Caco-2 (cell line): ENCODE measurements at regions of chr3 and their contacts with region 1.

Region 1: GRCh38 chr3:42190701-42191462 is 75.1 kb downstream of the CCK start:
- DNase-seq: peak; percentile 77 to 83
- H3K4me3 ChIP-seq: no peak overlapping the region
- H3K4me3 Mint-ChIP-seq: no peak overlapping the region
- H3K27ac Mint-ChIP-seq: peak overlapping the region; percentile 28
- H3K4me1 ChIP-seq: peaks cover 7% of the 10 kb centered on the region
- H3K4me1 Mint-ChIP-seq: no peaks in the 10 kb centered on the region
- H3K27me3 ChIP-seq: no peaks in the 10 kb centered on the region
- H3K27me3 Mint-ChIP-seq: no peaks in the 10 kb centered on the region
- CTCF ChIP-seq: peak; percentile 83 to 84

Region 2: GRCh38 chr3:42129014-42129953 is 61.6 kb before region 1 on chr3:
- CTCF ChIA-PET with region 1: interaction called, 32 read pairs
- POLR2A ChIA-PET with region 1: no interaction called
- intact Hi-C with region 1: loop called (anchors 1 kb)
- DNase-seq: peak; percentile 53 to 63
- H3K4me3 ChIP-seq: no peak overlapping the region
- H3K4me3 Mint-ChIP-seq: peak overlapping the region; percentile 48
- H3K27ac Mint-ChIP-seq: peak overlapping the region; percentile 91
- H3K4me1 ChIP-seq: peaks cover 46% of the 10 kb centered on the region
- H3K4me1 Mint-ChIP-seq: peaks cover 33% of the 10 kb centered on the region
- H3K27me3 ChIP-seq: no peaks in the 10 kb centered on the region
- H3K27me3 Mint-ChIP-seq: no peaks in the 10 kb centered on the region
- CTCF ChIP-seq: no peak

Region 3: DNA sequence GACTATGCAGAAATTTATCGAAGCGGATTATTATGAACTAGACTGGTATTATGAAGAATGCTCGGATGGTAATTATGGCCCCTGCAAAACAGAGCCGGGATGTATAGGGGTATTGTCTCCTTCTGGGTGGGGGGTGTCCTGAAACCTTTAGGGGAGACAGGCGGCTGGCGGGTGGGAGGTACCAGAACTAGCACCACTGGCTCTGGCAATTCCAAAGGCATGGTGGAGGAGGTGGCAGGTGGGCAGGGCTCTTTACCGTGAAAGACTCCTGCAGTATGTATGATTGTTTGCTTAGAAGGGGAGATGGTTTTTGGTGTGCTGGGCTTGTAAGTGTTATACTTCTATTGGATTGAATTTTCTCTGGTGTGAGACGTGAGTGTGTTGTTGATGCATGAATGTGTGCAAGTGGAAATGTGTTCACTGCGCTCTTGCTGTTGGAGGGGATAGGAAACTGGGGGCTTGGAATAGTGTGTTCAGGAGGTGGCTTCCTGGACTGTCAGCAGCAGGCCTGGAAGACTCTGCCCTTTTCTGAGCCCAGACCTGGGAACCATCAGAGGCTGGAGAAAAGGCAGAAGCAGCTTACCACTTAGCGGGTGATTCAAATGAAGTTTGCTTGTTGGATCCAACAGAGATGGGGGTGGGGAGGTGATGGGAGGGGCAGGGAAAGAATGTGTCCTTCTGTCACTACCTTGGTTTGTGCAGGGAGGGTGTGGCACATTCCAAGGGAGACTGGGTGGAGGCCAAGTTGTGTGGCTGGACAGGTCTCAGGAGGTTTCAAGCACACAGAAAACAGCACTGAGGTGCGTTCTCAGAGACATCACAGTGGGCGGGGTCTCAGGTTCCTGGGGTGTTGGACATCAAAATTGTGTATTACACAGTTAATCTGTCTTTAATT is 41.1 kb before region 1 on chr3:
- CTCF ChIA-PET with region 1: interaction called, 6 read pairs
- POLR2A ChIA-PET with region 1: no interaction called
- intact Hi-C with region 1: loop called (anchors 1 kb)
- DNase-seq: peak; percentile 88 to 97
- H3K4me3 ChIP-seq: no peak overlapping the region
- H3K4me3 Mint-ChIP-seq: peak overlapping the region; percentile 51
- H3K27ac Mint-ChIP-seq: peak overlapping the region; percentile 89
- H3K4me1 ChIP-seq: peaks cover 46% of the 10 kb centered on the region
- H3K4me1 Mint-ChIP-seq: peaks cover 18% of the 10 kb centered on the region
- H3K27me3 ChIP-seq: no peaks in the 10 kb centered on the region
- H3K27me3 Mint-ChIP-seq: no peaks in the 10 kb centered on the region
- CTCF ChIP-seq: no peak

Region 4: GRCh38 chr3:42179110-42179725 is 11.7 kb before region 1 on chr3:
- CTCF ChIA-PET with region 1: interaction called, 10 read pairs
- POLR2A ChIA-PET with region 1: no interaction called
- intact Hi-C with region 1: no loop called
- DNase-seq: peak; percentile 69
- H3K4me3 ChIP-seq: no peak overlapping the region
- H3K4me3 Mint-ChIP-seq: peak overlapping the region; percentile 67
- H3K27ac Mint-ChIP-seq: peak overlapping the region; percentile 96
- H3K4me1 ChIP-seq: peaks cover 30% of the 10 kb centered on the region
- H3K4me1 Mint-ChIP-seq: peaks cover 17% of the 10 kb centered on the region
- H3K27me3 ChIP-seq: no peaks in the 10 kb centered on the region
- H3K27me3 Mint-ChIP-seq: no peaks in the 10 kb centered on the region
- CTCF ChIP-seq: no peak

Region 5: DNA sequence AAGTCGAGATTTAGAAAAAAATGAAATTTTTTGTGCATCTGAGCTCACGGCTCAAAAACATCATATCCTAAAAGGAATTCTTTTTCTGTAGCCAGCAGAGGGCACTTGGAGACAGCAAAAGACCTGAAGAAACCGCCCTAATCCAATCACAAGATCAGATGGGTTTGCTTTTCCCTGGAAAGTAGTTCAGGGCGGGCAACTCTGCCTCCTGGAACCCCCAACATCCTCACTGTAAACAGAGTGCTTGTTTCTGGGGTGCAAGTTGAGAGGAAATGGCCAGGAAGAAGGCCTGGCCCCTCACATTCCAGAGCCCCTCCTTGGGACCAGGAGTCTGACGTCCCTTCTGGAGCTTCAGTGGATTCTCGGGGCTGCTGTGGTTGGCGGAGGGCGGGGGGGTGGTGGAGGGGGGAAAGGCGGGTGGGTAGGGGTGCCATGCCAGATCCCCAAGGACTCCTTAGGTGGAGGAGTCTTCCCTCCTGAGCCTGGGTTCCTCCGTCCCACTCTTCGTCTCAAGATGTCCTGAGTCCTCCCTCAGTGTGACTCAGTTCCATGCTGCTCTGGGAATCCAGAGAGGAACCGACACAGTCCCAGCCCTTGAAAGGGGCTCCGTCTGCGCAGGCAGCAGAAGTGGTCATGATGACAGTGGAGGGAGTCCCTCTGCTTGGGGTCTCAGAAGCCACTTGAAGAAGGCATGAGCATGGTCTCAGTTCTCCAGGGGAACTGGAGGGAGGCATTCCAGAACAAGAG is 39.2 kb after region 1 on chr3:
- CTCF ChIA-PET with region 1: interaction called, 10 read pairs
- POLR2A ChIA-PET with region 1: no interaction called
- intact Hi-C with region 1: no loop called
- DNase-seq: peak in 1 of 2 experiments; percentile 48
- H3K4me3 ChIP-seq: no peak overlapping the region
- H3K4me3 Mint-ChIP-seq: no peak overlapping the region
- H3K27ac Mint-ChIP-seq: no peak overlapping the region
- H3K4me1 ChIP-seq: peaks cover 4% of the 10 kb centered on the region; the same call in 1 of the 2 replicates
- H3K4me1 Mint-ChIP-seq: no peaks in the 10 kb centered on the region
- H3K27me3 ChIP-seq: no peaks in the 10 kb centered on the region
- H3K27me3 Mint-ChIP-seq: peaks cover 12% of the 10 kb centered on the region
- CTCF ChIP-seq: peak; percentile 55 to 61

Region 6: GRCh38 chr3:42276141-42277132 is 85.6 kb after region 1 on chr3:
- CTCF ChIA-PET with region 1: no interaction called
- POLR2A ChIA-PET with region 1: no interaction called
- intact Hi-C with region 1: no loop called
- DNase-seq: no peak
- H3K4me3 ChIP-seq: no peak overlapping the region
- H3K4me3 Mint-ChIP-seq: no peak overlapping the region
- H3K27ac Mint-ChIP-seq: no peak overlapping the region
- H3K4me1 ChIP-seq: no peaks in the 10 kb centered on the region
- H3K4me1 Mint-ChIP-seq: no peaks in the 10 kb centered on the region
- H3K27me3 ChIP-seq: no peaks in the 10 kb centered on the region
- H3K27me3 Mint-ChIP-seq: no peaks in the 10 kb centered on the region
- CTCF ChIP-seq: no peak